OCI-LY7 (cell line): ENCODE measurements at regions of chr7 and their contacts with region 1.

Region 1: DNA sequence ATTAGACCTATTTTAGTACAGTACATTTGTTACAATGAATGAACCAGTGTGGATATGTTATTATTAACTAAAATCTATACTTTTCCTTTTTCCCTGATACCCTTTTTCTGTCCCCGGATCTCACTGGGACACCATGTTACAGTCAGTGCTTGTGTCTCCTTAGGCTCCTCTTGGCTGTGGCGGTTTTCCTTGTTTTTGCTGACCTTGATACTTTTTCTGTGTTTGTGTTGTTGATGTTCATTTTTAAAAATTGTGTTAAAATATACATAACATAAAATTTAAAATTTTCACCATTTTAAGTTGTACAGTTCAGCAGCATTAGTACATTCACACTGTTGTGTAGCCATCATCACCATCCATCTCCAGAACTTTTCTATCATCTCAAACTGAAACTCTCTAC is 54.2 kb upstream of the OSBPL3 start:
- DNase-seq: no peak
- H3K4me3 ChIP-seq: no peak overlapping the region
- H3K27ac ChIP-seq: no peak overlapping the region
- H3K4me1 ChIP-seq: peaks cover 11% of the 10 kb centered on the region
- CTCF ChIP-seq: no peak

Region 2: DNA sequence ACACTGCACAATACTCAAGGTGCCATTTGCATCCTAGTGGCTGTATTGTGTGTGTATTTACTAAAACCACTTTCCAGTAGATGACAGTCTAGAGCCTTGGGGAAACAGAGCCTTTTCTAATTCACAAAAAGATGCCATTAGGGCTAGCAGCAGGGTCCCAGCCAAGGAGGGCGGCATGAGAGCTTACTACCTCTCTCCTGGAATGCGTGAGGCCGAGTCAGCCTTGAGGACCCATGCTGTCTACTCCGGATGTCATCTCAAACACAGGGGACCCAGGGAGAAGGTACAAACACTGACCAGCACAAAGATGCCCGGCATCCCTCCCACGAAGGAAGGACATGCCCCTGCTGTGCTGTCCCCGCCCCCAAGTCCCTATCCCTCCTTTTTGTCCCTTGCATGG is 25.4 kb after region 1 on chr7:
- CTCF ChIA-PET with region 1: no interaction called
- POLR2A ChIA-PET with region 1: interaction called, 3 read pairs
- intact Hi-C with region 1: loop called (anchors 1 kb)
- DNase-seq: no peak
- H3K4me3 ChIP-seq: no peak overlapping the region
- H3K27ac ChIP-seq: no peak overlapping the region
- H3K4me1 ChIP-seq: peaks cover 5% of the 10 kb centered on the region
- CTCF ChIP-seq: no peak

Region 3: DNA sequence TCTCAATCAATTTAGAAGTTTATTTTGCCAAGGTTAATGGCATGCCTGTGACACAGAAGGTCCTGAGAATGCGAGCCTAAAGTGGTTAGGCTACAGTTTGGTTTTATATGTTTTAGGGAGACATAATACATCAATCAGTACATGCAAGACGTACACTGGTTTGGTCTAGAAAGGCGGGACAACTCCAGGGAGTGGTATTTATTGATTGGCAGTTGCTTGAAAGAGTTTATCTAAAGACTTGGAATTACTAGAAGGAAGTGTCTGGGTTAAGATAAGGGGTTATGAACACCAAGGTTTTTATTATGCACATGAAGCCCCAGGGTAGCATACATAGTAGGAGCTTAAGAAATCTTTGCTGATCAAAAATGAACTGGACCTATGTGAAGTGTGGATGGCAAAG is 172.6 kb after region 1 on chr7:
- CTCF ChIA-PET with region 1: no interaction called
- POLR2A ChIA-PET with region 1: no interaction called
- intact Hi-C with region 1: no loop called
- DNase-seq: no peak
- H3K4me3 ChIP-seq: no peak overlapping the region
- H3K27ac ChIP-seq: no peak overlapping the region
- H3K4me1 ChIP-seq: peaks cover 18% of the 10 kb centered on the region
- CTCF ChIP-seq: no peak